ENCODE measurements at regions of chr6 and their contacts with region 1.

Region 1: GRCh38 chr6:28136585-28137504 is 4.8 kb upstream of the ZKSCAN8 start:
- DNase-seq: peak; percentile 91 to 95 (median 94)
- ATAC-seq: peak; percentile 76 to 94 (median 92)
- H3K4me3 ChIP-seq: peak overlapping the region; percentile 53 to 97 (median 86)
- H3K27ac ChIP-seq: peak overlapping the region; percentile 90 to 98 (median 96)
- H3K4me1 ChIP-seq: peaks cover 0 to 54% (median 23%) of the 10 kb centered on the region in 12 donors
- H3K27me3 ChIP-seq: no peaks in the 10 kb centered on the region
- CTCF ChIP-seq: peak in 1 of 12 donors; percentile 2
- POLR2A ChIP-seq: peak in 1 of 2 donors; percentile 25

Region 2: GRCh38 chr6:28080631-28081485 is 56.0 kb before region 1 on chr6:
- intact Hi-C with region 1: loop called in 2 of 10 experiments (anchors 2 to 5 kb)
- DNase-seq: peak; percentile 94 to 97 (median 95)
- ATAC-seq: peak; percentile 97 to 99 (median 99)
- H3K4me3 ChIP-seq: peak overlapping the region; percentile 56 to 94 (median 77)
- H3K27ac ChIP-seq: peak overlapping the region; percentile 59 to 91 (median 86)
- H3K4me1 ChIP-seq: peaks cover 0 to 16% (median 6%) of the 10 kb centered on the region in 12 donors
- H3K27me3 ChIP-seq: no peaks in the 10 kb centered on the region
- CTCF ChIP-seq: peak in 1 of 12 donors; percentile 6
- POLR2A ChIP-seq: peak in 1 of 2 donors; percentile 48

Region 3: DNA sequence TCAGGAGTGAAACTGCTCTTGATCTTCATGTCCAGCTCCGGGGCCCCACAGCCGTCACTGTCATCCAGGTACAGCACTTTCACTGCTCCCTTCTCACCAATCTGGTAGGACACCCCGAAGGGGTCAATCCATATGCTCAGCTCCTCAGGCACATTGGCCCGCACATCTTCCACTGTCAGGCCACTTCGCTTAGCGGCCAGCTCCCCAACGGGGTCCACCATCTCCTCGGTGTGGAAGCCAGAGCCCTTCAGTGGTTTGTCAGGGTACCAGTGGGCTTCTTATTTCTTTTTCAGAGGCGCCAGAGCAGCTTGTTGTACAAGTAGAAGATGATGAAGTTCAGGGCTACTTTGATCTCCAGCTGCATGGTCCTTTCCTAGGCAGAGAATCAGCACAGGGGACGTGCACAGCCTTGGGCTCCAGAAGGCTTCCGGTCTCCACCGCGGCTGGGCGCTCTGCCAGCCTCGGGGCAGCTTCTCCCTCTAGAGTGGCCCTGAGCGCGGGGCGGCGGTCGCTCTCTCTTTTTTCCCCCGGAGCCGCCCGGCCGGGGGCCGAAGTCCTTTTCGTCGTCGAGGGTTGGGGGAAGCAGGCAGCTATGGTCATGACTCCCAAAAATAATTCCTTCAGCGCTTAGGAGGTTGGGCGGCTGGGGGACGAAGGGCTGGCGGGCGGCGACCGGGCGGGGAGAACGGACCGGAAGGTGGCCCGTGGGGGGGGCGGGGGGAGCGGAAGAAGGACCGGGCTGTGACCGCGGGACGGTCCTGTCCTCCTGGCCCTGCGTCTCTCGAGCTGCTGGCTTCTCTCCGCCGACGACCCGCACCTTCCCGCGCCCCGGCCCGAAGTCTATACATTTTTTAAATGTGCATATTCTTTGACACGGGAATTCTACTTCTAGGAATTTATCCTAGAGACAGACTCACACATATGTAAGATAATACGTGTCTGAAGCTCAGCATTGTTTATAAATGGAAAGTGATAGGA is 81.7 kb after region 1 on chr6:
- intact Hi-C with region 1: loop called in 9 of 10 experiments (anchors 5 to 10 kb)
- DNase-seq: peak; percentile 84 to 90 (median 87)
- ATAC-seq: peak; percentile 80 to 98 (median 95)
- H3K4me3 ChIP-seq: peak overlapping the region; percentile 20 to 78 (median 70)
- H3K27ac ChIP-seq: peak overlapping the region in 11 of 12 donors; percentile 56 to 92 (median 73)
- H3K4me1 ChIP-seq: peaks cover 0 to 21% (median 11%) of the 10 kb centered on the region in 12 donors
- H3K27me3 ChIP-seq: peaks cover 0 to 50% (median 34%) of the 10 kb centered on the region in 9 donors
- CTCF ChIP-seq: peak in 1 of 12 donors; percentile 14
- POLR2A ChIP-seq: peak in 1 of 2 donors; percentile 20

Region 4: DNA sequence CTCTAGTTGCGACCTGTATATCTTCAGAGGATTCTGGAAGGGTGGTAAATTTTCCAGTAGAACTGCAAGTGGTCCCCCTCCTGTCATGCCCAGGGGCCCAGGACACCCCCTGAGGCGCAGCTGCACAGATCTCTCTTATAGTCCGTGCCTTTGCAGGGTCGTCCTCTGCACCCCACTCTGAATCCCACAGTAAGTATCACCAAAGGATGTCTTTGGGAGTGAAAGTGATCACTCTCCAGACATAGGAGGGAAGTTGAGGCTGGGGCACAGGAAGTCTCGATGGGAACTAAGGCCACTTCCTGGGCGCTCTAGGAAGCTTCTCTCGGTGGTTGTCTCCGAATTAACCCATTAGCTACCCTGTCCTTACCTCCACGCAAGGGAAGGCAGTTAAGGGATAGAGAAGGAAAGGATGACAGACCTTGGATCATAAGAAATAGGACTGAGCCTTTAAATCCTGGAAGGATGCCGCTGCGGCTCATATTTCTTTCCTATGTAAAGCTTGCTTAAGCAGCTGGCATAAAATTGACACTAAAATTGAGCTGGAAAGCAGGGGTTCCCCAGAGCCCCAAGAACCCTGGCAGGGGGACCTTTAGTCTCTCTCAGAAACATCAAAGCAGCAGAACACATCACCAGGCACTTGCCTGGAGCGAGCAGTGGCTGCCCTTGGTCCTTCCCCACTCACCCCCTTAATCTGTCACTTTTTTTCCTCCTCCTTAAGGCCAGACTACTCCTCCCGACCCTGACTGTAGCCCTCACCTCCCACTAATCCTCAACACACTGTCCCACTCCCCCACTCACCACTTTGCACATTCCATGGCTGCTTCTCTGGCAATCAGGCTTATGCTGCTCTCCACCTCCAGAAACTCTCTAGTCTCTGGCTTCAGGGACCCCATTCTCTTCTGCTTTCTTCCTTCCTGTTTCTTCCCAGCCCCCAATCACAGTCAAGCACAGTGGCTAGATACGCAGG is 115.4 kb after region 1 on chr6 and contains the start of gene ZKSCAN4:
- intact Hi-C with region 1: loop called in 1 of 10 experiments (anchors 10 kb)
- DNase-seq: peak; percentile 72 to 90 (median 84)
- ATAC-seq: peak; percentile 96 to 99 (median 98)
- H3K4me3 ChIP-seq: peak within 1 kb of the TSS; percentile 54 to 87 (median 78)
- H3K27ac ChIP-seq: peak within 1 kb of the TSS in 11 of 12 donors; percentile 9 to 83 (median 58)
- H3K4me1 ChIP-seq: peaks cover 6 to 32% (median 15%) of the 10 kb centered on the region in 12 donors
- H3K27me3 ChIP-seq: no peaks in the 10 kb centered on the region
- CTCF ChIP-seq: no peak
- POLR2A ChIP-seq: no peak
- total RNA-seq, gene ZKSCAN4: 2.1 to 5.0 (median 2.5) TPM

Region 5: DNA sequence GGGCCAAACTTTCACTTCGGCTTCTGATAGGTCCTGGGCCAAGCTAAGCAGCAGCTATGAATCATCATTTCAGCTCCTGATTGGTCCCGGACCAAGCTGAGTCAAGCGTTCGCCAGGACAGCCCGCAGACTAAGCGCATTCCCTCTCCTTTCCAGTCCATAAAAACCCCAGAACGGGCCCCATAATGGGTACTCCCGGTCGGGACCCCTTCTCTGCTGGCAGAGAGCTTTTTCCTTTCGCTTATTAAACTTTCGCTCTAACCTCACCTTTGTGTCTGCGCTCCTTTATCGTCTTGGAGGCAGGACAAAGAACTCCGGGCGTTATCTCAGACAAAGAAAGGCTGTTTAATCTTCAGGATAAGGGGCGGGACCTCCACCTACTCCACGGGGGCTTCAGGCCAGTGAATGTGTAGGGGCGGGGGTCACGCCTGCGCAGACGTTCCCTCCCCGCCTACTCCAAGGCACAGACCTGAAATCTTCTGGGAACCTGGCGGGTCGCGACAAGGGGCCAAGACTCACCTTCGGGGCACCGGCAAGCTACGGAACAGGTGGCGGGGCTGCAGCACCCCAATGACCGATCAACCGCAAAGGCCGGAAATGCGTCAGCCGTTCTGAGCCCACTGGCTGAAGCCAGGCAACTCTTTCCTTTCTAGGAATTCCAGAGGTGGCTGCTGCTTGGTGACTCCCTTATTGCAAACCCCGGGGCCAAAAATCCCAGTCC is 198.9 kb after region 1 on chr6 and contains the start of gene ZSCAN31:
- intact Hi-C with region 1: loop called in 1 of 10 experiments (anchors 5 kb)
- DNase-seq: peak; percentile 93 to 98 (median 96)
- ATAC-seq: peak; percentile 96 to 98 (median 97)
- H3K4me3 ChIP-seq: peak within 1 kb of the TSS; percentile 57 to 85 (median 74)
- H3K27ac ChIP-seq: peak within 1 kb of the TSS; percentile 90 to 100 (median 97)
- H3K4me1 ChIP-seq: peaks cover 0 to 24% (median 12%) of the 10 kb centered on the region in 12 donors
- H3K27me3 ChIP-seq: no peaks in the 10 kb centered on the region
- CTCF ChIP-seq: no peak
- POLR2A ChIP-seq: peak; percentile 49 to 83
- total RNA-seq, gene ZSCAN31: 7.5 to 22.0 (median 10.7) TPM

Region 6: DNA sequence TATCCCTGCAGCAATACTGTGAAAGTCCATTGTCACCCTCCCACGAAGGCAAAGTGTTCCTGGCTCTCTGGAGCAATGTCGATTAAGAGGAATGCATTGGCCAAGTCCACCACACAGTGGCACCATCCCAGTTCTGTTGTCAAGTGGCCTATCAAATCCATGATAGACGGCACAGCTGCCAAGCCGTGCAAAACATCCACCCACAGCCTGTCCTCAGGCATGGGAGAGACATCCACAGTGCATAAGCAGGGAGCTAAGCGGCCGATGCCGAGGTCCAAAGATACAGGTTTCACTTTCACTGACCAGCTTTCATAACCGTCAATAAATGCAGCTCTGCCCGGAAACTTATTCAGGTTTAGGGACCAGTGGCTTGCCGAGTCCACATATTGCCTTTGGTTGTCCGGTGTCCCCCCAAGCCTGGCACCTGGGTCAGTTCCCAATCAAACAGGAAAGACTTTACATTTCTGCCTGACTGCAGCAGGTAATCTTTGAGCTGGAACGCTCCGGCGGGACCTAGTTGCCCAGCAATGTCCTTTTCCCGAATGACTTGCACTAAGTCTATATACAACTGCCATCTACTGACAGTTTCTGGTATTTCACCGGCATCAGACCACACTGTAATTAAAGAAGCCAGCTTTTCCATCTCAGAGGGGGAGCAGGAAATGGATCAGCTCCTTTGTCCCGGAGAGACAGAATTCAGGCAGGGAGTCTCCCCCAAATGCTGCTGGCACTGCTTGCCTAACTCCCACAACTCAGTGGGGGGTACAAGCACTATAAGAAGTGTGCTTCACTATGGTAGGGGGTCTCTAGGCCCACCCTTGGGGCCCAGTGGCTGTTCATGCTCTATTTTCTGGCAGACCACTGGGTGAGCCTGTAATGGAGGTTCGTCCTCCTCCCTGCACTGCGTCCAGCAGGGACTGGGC is 219.2 kb after region 1 on chr6:
- intact Hi-C with region 1: loop called in 9 of 10 experiments (anchors 2 to 5 kb)
- DNase-seq: peak; percentile 67 to 84 (median 80)
- ATAC-seq: peak; percentile 86 to 90 (median 89)
- H3K4me3 ChIP-seq: peak overlapping the region; percentile 20 to 86 (median 67)
- H3K27ac ChIP-seq: peak overlapping the region; percentile 72 to 91 (median 89)
- H3K4me1 ChIP-seq: peaks cover 3 to 42% (median 29%) of the 10 kb centered on the region in 12 donors
- H3K27me3 ChIP-seq: no peaks in the 10 kb centered on the region
- CTCF ChIP-seq: peak; percentile 71 to 91 (median 80)
- POLR2A ChIP-seq: no peak

Measured in heart left ventricle (tissue), 16 donors.